CD14-positive monocyte (primary cell): ENCODE measurements at regions of chr6 and their contacts with region 1.

Region 1: DNA sequence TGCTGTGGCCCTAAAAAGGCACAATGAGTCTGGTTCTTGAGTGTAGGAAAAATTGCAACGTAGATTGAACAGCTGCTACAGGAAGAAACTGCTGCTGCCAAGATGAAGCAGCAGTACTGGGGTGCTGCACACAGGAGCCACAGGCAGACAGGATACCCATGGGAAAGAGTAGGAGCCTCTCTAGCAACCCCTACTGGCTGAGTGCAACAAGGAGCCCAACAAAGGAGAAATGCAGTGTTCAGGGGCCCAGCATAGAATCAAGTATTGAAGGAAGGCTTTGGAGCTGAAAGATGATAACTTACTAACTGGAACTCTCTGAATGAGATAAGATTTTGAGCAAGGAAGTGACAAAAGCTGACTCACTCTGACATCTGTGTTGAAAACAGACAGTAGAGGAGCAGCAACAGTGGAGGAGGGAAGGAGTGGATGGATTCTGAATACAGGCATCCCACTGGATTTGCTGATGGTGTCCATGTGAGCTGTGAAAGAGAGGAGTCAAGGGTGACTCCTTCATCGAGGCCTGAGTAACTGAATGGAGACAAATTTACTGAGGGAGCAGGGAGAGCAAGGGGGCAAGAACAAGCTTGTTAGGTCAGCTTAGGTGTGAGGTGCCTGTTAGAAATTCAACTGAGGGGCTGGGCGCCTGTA is 534.7 kb upstream of the JARID2 start:
- DNase-seq: peak; percentile 80 to 91 (median 89)
- H3K4me3 ChIP-seq: no peak overlapping the region
- H3K4me3 Mint-ChIP-seq: no peak overlapping the region
- H3K27ac ChIP-seq: peak overlapping the region; percentile 31 to 90
- H3K27ac Mint-ChIP-seq: peak overlapping the region; percentile 89 to 99 (median 97)
- H3K4me1 ChIP-seq: peaks cover 41 to 48% of the 10 kb centered on the region in 2 donors
- H3K4me1 Mint-ChIP-seq: peaks cover 72% of the 10 kb centered on the region
- H3K27me3 ChIP-seq: no peaks in the 10 kb centered on the region
- H3K27me3 Mint-ChIP-seq: peaks cover 0 to 6% (median 5%) of the 10 kb centered on the region in 3 donors
- CTCF ChIP-seq: peak; percentile 84

Region 2: DNA sequence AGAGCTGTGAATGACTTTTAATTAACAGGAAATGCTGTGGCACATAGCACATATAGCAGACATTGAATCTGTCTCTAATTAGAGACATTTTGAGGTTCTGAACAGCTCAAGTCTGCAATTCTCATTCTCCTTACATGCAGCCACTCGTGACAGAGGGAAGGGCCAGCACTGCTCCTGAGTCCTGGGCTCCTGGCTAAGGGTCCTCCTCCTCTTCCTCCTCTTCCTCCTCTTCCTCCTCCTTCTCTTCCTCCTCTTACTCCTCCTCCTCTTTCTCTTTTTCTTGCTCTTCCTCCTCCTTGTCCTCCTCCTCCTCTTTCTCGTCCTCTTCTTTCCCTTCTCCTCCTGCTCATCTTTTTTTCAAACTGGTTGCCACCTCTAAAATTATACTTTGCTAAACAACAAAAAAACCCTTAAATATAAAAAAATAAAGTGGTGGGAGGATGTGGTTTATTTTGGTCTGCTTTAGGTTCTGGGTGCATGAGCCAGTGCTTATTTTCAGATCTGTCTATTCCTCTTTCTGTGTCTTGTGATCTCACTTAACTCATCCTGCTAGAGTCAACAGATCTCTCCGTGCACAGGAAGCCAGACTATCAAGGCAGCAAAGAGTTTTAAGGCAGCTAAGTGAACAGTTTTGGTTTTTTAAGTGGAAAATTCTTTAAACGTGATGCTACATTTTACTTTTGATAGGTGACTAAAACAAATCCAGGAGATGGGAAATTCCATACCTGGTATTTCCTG is 434.3 kb before region 1 on chr6:
- intact Hi-C with region 1: loop called in 1 of 2 experiments (anchors 10 kb)
- DNase-seq: peak; percentile 42 to 61 (median 42)
- H3K4me3 ChIP-seq: peak overlapping the region in 1 of 3 experiments; percentile 44
- H3K4me3 Mint-ChIP-seq: peak overlapping the region; percentile 56 to 84
- H3K27ac ChIP-seq: peak overlapping the region; percentile 55 to 78
- H3K27ac Mint-ChIP-seq: peak overlapping the region; percentile 50 to 96 (median 83)
- H3K4me1 ChIP-seq: peaks cover 42 to 47% of the 10 kb centered on the region in 2 donors
- H3K4me1 Mint-ChIP-seq: peaks cover 52% of the 10 kb centered on the region
- H3K27me3 ChIP-seq: no peaks in the 10 kb centered on the region
- H3K27me3 Mint-ChIP-seq: peaks cover 0 to 2% (median 2%) of the 10 kb centered on the region in 3 donors
- CTCF ChIP-seq: no peak

Region 3: DNA sequence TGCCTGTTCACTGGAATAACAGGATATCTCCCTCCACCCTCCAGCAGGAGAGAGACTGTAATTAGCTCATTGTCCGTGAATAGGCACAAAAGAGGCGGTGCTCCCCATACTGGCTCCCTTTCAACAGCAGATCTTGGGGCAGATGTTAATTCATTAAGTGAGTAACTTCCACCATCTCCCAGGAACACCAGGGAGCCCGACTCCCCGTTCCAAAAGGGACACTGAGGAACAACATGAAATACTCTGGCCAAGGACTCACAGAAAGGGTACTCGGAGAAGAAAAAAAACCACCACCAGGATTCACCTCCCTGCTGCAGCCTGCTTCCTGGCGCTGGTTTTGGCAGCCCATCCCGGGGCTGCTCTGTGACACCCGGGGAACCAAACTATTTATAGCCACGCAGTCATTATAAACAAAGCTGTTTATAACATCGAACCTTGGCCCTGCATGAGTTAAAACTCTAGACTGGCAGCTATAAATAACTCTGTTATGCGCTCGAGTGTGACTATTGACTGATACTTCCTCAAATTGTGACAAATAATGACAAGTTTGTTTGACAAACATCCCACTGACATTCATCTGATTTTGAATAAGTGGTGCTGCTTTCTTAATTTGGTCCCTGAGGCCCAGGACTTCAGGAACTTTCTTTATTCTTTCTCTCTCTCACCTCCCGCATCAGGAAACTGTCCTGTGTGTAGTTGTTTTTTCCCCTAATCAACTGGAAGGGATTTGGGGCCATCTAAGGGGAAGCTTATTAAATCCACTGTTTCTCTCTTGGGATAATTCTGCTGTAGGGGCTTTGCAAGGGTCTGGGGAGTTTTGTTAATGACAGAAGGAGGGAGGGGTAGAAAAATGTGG is 72.0 kb before region 1 on chr6:
- intact Hi-C with region 1: loop called in 1 of 2 experiments (anchors 10 kb)
- DNase-seq: peak; percentile 74 to 79 (median 75)
- H3K4me3 ChIP-seq: peak overlapping the region; percentile 35 to 69 (median 57)
- H3K4me3 Mint-ChIP-seq: peak overlapping the region; percentile 81 to 95
- H3K27ac ChIP-seq: peak overlapping the region; percentile 35 to 89
- H3K27ac Mint-ChIP-seq: peak overlapping the region; percentile 69 to 98 (median 96)
- H3K4me1 ChIP-seq: peaks cover 28 to 38% of the 10 kb centered on the region in 2 donors
- H3K4me1 Mint-ChIP-seq: peaks cover 50% of the 10 kb centered on the region
- H3K27me3 ChIP-seq: no peaks in the 10 kb centered on the region
- H3K27me3 Mint-ChIP-seq: peaks cover 0 to 9% (median 0%) of the 10 kb centered on the region in 3 donors
- CTCF ChIP-seq: no peak

Region 4: DNA sequence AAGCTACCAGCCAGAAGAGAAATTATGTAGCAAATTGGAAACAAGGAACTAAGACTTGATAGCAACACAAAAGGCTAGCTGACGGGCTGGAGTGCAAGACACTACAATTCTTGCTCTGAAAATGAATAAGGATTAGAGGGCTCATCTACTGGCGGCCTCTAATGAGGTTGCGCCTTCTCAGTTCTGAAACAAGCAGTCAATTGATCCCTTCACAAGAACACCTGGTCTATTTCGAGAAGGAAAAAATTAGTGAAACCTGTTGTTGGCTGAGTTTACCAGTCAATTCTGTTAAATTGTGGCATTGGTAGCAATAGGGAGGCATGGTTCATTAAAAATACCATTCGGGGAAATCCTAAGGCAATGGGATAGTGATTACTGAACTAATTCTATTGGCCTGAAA is 459.8 kb after region 1 on chr6:
- intact Hi-C with region 1: no loop called
- DNase-seq: no peak
- H3K4me3 ChIP-seq: no peak overlapping the region
- H3K4me3 Mint-ChIP-seq: no peak overlapping the region
- H3K27ac ChIP-seq: no peak overlapping the region
- H3K27ac Mint-ChIP-seq: no peak overlapping the region
- H3K4me1 ChIP-seq: peaks cover 9 to 11% of the 10 kb centered on the region in 2 donors
- H3K4me1 Mint-ChIP-seq: peaks cover 13% of the 10 kb centered on the region
- H3K27me3 ChIP-seq: no peaks in the 10 kb centered on the region
- H3K27me3 Mint-ChIP-seq: peaks cover 0 to 3% (median 0%) of the 10 kb centered on the region in 3 donors
- CTCF ChIP-seq: no peak